Psoas muscle (tissue), 8 donors: ENCODE measurements at regions of chr19 and their contacts with region 1.

Region 1: GRCh38 chr19:45779231-45780145 is 2.8 kb downstream of the DMPK start:
- DNase-seq: peak; percentile 84 to 85
- ATAC-seq: no peak
- H3K4me3 ChIP-seq: peak overlapping the region; percentile 87
- H3K27ac ChIP-seq: peak overlapping the region; percentile 41
- H3K4me1 ChIP-seq: peaks cover 28% of the 10 kb centered on the region
- H3K27me3 ChIP-seq: no peaks in the 10 kb centered on the region
- CTCF ChIP-seq: no peak

Region 2: GRCh38 chr19:44746946-44747738 is 1032.3 kb before region 1 on chr19:
- intact Hi-C with region 1: loop called in 1 of 2 experiments (anchors 10 kb)
- DNase-seq: peak; percentile 97 to 98
- ATAC-seq: peak; percentile 91 to 96 (median 95)
- H3K4me3 ChIP-seq: peak overlapping the region; percentile 97
- H3K27ac ChIP-seq: peak overlapping the region; percentile 94
- H3K4me1 ChIP-seq: peaks cover 48% of the 10 kb centered on the region
- H3K27me3 ChIP-seq: no peaks in the 10 kb centered on the region
- CTCF ChIP-seq: no peak

Region 3: GRCh38 chr19:45607071-45608029 is 172.1 kb before region 1 on chr19:
- intact Hi-C with region 1: no loop called
- DNase-seq: peak; percentile 77 to 85
- ATAC-seq: peak; percentile 63 to 90 (median 84)
- H3K4me3 ChIP-seq: peak overlapping the region; percentile 33
- H3K27ac ChIP-seq: no peak overlapping the region
- H3K4me1 ChIP-seq: no peaks in the 10 kb centered on the region
- H3K27me3 ChIP-seq: peaks cover 0 to 18% (median 3%) of the 10 kb centered on the region in 3 donors
- CTCF ChIP-seq: peak; percentile 80

Region 4: DNA sequence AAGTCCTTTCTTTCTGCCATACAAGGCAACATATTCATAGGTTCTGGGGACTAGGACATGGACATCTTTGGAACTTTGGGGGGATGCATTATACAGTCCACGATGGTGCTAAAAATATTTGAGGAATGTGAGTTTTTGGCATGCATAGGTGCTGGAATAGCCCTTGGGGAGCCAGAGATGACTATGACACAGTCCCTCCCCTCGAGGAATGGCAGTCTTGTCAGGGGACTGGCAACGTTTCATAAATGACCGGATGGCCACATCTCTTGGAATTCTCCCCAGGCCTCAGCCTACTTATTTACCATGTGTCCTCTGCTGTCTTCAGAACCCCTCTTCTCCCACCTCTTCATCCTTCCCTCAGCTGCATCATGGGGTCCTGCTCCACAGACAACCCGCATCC is 32.6 kb before region 1 on chr19:
- intact Hi-C with region 1: no loop called
- DNase-seq: no peak
- ATAC-seq: no peak
- H3K4me3 ChIP-seq: no peak overlapping the region
- H3K27ac ChIP-seq: no peak overlapping the region
- H3K4me1 ChIP-seq: no peaks in the 10 kb centered on the region
- H3K27me3 ChIP-seq: no peaks in the 10 kb centered on the region
- CTCF ChIP-seq: no peak

Region 5: GRCh38 chr19:45798995-45799517 is 19.6 kb after region 1 on chr19:
- intact Hi-C with region 1: no loop called
- DNase-seq: peak; percentile 57 to 80
- ATAC-seq: peak; percentile 70 to 87 (median 80)
- H3K4me3 ChIP-seq: no peak overlapping the region
- H3K27ac ChIP-seq: peak overlapping the region; percentile 62
- H3K4me1 ChIP-seq: peaks cover 15% of the 10 kb centered on the region
- H3K27me3 ChIP-seq: no peaks in the 10 kb centered on the region
- CTCF ChIP-seq: peak; percentile 91

Region 6: GRCh38 chr19:45834970-45835369 is 55.5 kb after region 1 on chr19:
- intact Hi-C with region 1: no loop called
- DNase-seq: peak in 1 of 2 donors; percentile 23
- ATAC-seq: peak in 1 of 4 donors; percentile 14
- H3K4me3 ChIP-seq: no peak overlapping the region
- H3K27ac ChIP-seq: no peak overlapping the region
- H3K4me1 ChIP-seq: no peaks in the 10 kb centered on the region
- H3K27me3 ChIP-seq: no peaks in the 10 kb centered on the region
- CTCF ChIP-seq: no peak